ENCODE measurements at regions of chr10 and their contacts with region 1.

Region 1: DNA sequence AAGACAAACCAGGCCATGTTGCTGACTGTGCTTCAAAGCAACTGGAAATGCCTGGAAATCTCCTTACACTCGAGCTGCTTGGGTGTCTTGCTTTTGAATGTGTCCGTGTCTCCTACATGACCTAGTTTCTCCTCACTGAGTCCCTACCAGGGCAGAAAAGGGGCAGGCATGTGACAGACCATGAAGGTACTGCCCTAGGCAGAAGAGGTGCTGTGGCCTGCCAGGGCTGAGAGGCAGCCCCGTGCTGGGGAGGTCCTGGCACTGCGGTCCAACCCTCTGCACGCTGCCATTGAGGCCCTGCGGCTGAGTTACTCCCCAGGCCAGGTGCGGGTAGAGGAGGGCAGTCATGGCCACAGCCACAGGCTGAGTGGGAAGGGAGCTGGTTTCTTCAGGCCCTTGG is 159.3 kb downstream of the LYZL1 start:
- DNase-seq: no peak
- H3K4me3 ChIP-seq: no peak overlapping the region
- H3K27me3 ChIP-seq: no peaks in the 10 kb centered on the region
- CTCF ChIP-seq: no peak

Region 2: GRCh38 chr10:29386342-29386999 is 61.7 kb before region 1 on chr10:
- CTCF ChIA-PET with region 1: interaction called, 11 read pairs
- POLR2A ChIA-PET with region 1: no interaction called
- DNase-seq: no peak
- H3K4me3 ChIP-seq: no peak overlapping the region
- H3K27me3 ChIP-seq: peaks cover 11% of the 10 kb centered on the region
- CTCF ChIP-seq: peak; percentile 67

Region 3: GRCh38 chr10:29465384-29465783 is 17.3 kb after region 1 on chr10:
- CTCF ChIA-PET with region 1: interaction called, 13 read pairs
- POLR2A ChIA-PET with region 1: no interaction called
- DNase-seq: no peak
- H3K4me3 ChIP-seq: no peak overlapping the region
- H3K27me3 ChIP-seq: no peaks in the 10 kb centered on the region
- CTCF ChIP-seq: no peak; the same call in 1 of the 2 replicates

Region 4: GRCh38 chr10:29908962-29909361 is 460.8 kb after region 1 on chr10:
- CTCF ChIA-PET with region 1: no interaction called
- POLR2A ChIA-PET with region 1: interaction called, 11 read pairs
- DNase-seq: no peak
- H3K4me3 ChIP-seq: no peak overlapping the region
- H3K27me3 ChIP-seq: peaks cover 11% of the 10 kb centered on the region
- CTCF ChIP-seq: no peak

Region 5: GRCh38 chr10:29926693-29927048 is 478.5 kb after region 1 on chr10:
- CTCF ChIA-PET with region 1: no interaction called
- POLR2A ChIA-PET with region 1: no interaction called
- DNase-seq: no peak
- H3K4me3 ChIP-seq: no peak overlapping the region
- H3K27me3 ChIP-seq: peaks cover 22% of the 10 kb centered on the region
- CTCF ChIP-seq: peak; percentile 70

Measured in BJ (cell line).